ENCODE measurements at regions of chr12 and their contacts with region 1.

Region 1: GRCh38 chr12:64890873-64891468 is 66.5 kb downstream of the TBC1D30 start:
- DNase-seq: peak in 3 of 14 experiments; percentile 58 to 74 (median 68)
- ATAC-seq: peak; percentile 44
- H3K4me3 ChIP-seq: no peak overlapping the region
- H3K4me3 Mint-ChIP-seq: no peak overlapping the region
- H3K27ac ChIP-seq: no peak overlapping the region
- H3K27ac Mint-ChIP-seq: no peak overlapping the region
- H3K4me1 ChIP-seq: no peaks in the 10 kb centered on the region
- H3K4me1 Mint-ChIP-seq: no peaks in the 10 kb centered on the region
- H3K27me3 ChIP-seq: peaks cover 0 to 4% of the 10 kb centered on the region in 2 experiments
- H3K27me3 Mint-ChIP-seq: peaks cover 22% of the 10 kb centered on the region
- CTCF ChIP-seq: peak; percentile 90

Region 2: DNA sequence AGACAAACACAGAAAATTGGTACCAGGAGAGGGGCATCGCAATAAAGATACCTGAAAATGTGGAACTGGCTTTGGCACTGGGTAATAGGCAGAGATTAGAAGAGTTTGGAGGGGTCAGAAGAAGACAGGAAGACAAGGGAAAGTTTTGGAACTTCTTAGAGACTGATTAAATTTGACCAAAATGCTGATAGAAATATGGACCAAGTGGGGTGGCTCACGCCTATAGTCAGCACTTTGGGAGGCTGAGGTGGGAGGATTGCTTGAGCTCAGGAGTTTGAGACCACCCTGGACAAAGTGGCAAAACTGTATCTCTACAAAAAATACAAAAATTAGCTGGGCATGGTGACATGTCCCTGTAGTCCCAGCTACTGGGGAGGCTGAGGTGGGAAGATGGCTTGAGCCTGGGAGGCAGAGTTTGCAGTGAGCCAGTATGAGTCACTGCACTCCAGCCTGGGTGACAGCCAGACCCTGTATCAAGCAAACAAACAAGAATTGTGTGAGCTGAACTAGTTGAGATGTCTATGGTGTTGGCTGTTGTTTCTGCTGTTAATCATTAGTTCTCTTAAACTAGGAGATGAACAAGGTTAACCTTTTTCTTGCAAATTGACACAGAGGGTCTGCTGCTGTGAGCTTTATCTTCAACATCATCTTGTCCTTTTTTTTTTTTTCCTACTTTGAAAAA is 257.2 kb before region 1 on chr12:
- CTCF ChIA-PET with region 1: no interaction called
- POLR2A ChIA-PET with region 1: no interaction called
- intact Hi-C with region 1: no loop called
- DNase-seq: peak in 7 of 14 experiments; percentile 38 to 67 (median 43)
- ATAC-seq: peak; percentile 47
- H3K4me3 ChIP-seq: no peak overlapping the region
- H3K4me3 Mint-ChIP-seq: peak overlapping the region; percentile 61
- H3K27ac ChIP-seq: peak overlapping the region in 1 of 2 donors; percentile 57
- H3K27ac Mint-ChIP-seq: peak overlapping the region; percentile 71
- H3K4me1 ChIP-seq: peaks cover 65% of the 10 kb centered on the region
- H3K4me1 Mint-ChIP-seq: peaks cover 82% of the 10 kb centered on the region
- H3K27me3 ChIP-seq: no peaks in the 10 kb centered on the region
- H3K27me3 Mint-ChIP-seq: no peaks in the 10 kb centered on the region
- CTCF ChIP-seq: no peak

Region 3: GRCh38 chr12:65232476-65233077 is 341.6 kb after region 1 on chr12:
- CTCF ChIA-PET with region 1: interaction called, 20 read pairs
- POLR2A ChIA-PET with region 1: no interaction called
- intact Hi-C with region 1: loop called (anchors 1 to 2 kb)
- DNase-seq: peak in 3 of 14 experiments; percentile 39 to 47 (median 42)
- ATAC-seq: peak; percentile 54
- H3K4me3 ChIP-seq: no peak overlapping the region
- H3K4me3 Mint-ChIP-seq: no peak overlapping the region
- H3K27ac ChIP-seq: no peak overlapping the region
- H3K27ac Mint-ChIP-seq: peak overlapping the region; percentile 35
- H3K4me1 ChIP-seq: no peaks in the 10 kb centered on the region
- H3K4me1 Mint-ChIP-seq: peaks cover 10% of the 10 kb centered on the region
- H3K27me3 ChIP-seq: no peaks in the 10 kb centered on the region
- H3K27me3 Mint-ChIP-seq: no peaks in the 10 kb centered on the region
- CTCF ChIP-seq: peak; percentile 74

Region 4: DNA sequence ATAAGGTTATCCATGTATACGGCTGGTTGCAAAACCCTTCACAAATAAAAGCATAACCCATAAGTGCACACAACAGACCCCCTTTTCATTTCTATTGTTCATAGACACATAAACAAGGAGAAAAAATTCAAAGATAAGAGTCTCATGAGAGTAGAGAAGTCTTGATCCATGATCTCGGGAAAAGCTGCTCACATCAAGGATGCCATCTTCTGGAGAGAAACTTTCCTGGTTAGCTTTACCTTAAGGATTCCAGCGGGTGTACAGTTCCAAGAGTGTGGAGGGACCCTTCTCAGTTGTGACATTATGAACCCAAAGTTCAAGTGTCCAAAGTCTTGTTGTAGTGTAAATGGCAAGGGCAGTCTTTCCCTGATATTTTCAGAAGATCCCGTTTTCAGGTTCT is 1095.1 kb after region 1 on chr12:
- CTCF ChIA-PET with region 1: interaction called, 4 read pairs
- POLR2A ChIA-PET with region 1: no interaction called
- intact Hi-C with region 1: loop called (anchors 1 kb)
- DNase-seq: no peak
- ATAC-seq: no peak
- H3K4me3 ChIP-seq: no peak overlapping the region
- H3K4me3 Mint-ChIP-seq: no peak overlapping the region
- H3K27ac ChIP-seq: no peak overlapping the region
- H3K27ac Mint-ChIP-seq: no peak overlapping the region
- H3K4me1 ChIP-seq: no peaks in the 10 kb centered on the region
- H3K4me1 Mint-ChIP-seq: no peaks in the 10 kb centered on the region
- H3K27me3 ChIP-seq: peaks cover 0 to 4% of the 10 kb centered on the region in 2 experiments
- H3K27me3 Mint-ChIP-seq: peaks cover 11% of the 10 kb centered on the region
- CTCF ChIP-seq: no peak

Region 5: GRCh38 chr12:66107451-66107915 is 1216.5 kb after region 1 on chr12:
- CTCF ChIA-PET with region 1: no interaction called
- POLR2A ChIA-PET with region 1: no interaction called
- intact Hi-C with region 1: loop called (anchors 1 kb)
- DNase-seq: peak in 10 of 14 experiments; percentile 7 to 85 (median 38)
- ATAC-seq: peak; percentile 91
- H3K4me3 ChIP-seq: no peak overlapping the region
- H3K4me3 Mint-ChIP-seq: no peak overlapping the region
- H3K27ac ChIP-seq: no peak overlapping the region
- H3K27ac Mint-ChIP-seq: no peak overlapping the region
- H3K4me1 ChIP-seq: peaks cover 4% of the 10 kb centered on the region
- H3K4me1 Mint-ChIP-seq: peaks cover 5% of the 10 kb centered on the region
- H3K27me3 ChIP-seq: peaks cover 0 to 3% of the 10 kb centered on the region in 2 experiments
- H3K27me3 Mint-ChIP-seq: peaks cover 28% of the 10 kb centered on the region
- CTCF ChIP-seq: peak; percentile 85

Region 6: GRCh38 chr12:66693901-66694675 is 1803.1 kb after region 1 on chr12:
- CTCF ChIA-PET with region 1: no interaction called
- POLR2A ChIA-PET with region 1: no interaction called
- intact Hi-C with region 1: loop called in 1 of 2 experiments (anchors 10 kb)
- DNase-seq: peak in 6 of 14 experiments; percentile 1 to 75 (median 48)
- ATAC-seq: peak; percentile 89
- H3K4me3 ChIP-seq: no peak overlapping the region
- H3K4me3 Mint-ChIP-seq: no peak overlapping the region
- H3K27ac ChIP-seq: no peak overlapping the region
- H3K27ac Mint-ChIP-seq: no peak overlapping the region
- H3K4me1 ChIP-seq: no peaks in the 10 kb centered on the region
- H3K4me1 Mint-ChIP-seq: peaks cover 22% of the 10 kb centered on the region
- H3K27me3 ChIP-seq: no peaks in the 10 kb centered on the region
- H3K27me3 Mint-ChIP-seq: no peaks in the 10 kb centered on the region
- CTCF ChIP-seq: peak; percentile 76

Measured in CD4-positive, alpha-beta T cell (primary cell).